ENCODE measurements at regions of chr4 and their contacts with region 1.

Region 1: GRCh38 chr4:7192252-7193029 is at the start of gene SORCS2:
- DNase-seq: no peak
- H3K4me3 ChIP-seq: peak within 1 kb of the TSS; percentile 23 to 67 (median 40)
- H3K27ac ChIP-seq: no peak within 1 kb of the TSS
- H3K4me1 ChIP-seq: peaks cover 18 to 49% (median 22%) of the 10 kb centered on the region in 3 donors
- H3K27me3 ChIP-seq: peaks cover 5 to 97% (median 9%) of the 10 kb centered on the region in 4 donors
- CTCF ChIP-seq: peak in 5 of 6 experiments; percentile 27 to 93 (median 83)
- POLR2A ChIP-seq: no peak
- total RNA-seq, gene SORCS2: 1.1 to 2.5 (median 2.0) TPM

Region 2: DNA sequence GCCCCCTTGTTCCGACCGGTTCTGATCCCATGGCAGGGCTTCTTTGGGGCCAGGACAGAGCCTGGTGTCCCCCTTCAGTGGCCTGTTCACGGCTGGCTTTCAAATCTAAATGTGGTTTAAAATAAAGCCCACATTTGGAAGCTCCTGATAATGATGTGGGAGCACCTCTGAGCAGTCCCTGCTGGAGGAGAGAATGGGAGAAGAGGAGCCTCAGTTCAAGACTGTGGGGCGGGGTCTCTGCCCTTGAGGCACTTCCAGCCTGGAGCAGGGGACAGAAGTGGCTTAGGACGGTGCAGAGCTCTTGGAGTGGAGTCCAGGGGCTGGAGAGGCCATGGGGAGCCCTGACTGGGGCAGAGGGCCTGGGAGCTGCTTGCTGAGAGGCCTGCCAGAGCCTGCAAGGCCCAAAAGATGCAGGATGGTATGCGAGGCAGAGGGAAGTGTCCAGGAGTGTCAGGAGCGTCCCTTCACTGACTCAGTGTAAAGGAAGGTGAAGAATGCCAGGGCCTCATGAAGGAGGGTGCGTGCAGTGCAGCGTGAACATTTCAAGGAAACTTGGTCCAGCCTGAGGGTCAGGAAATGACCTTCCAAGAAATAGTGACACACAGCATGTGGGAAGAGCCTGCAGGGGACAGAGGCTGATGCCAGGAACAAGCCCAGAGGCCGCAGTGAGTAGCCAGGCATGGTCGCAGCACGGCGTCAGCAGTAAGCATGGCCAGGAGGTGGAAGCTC is 170.3 kb before region 1 on chr4:
- intact Hi-C with region 1: no loop called
- DNase-seq: no peak
- H3K4me3 ChIP-seq: no peak overlapping the region
- H3K27ac ChIP-seq: no peak overlapping the region
- H3K4me1 ChIP-seq: no peaks in the 10 kb centered on the region
- H3K27me3 ChIP-seq: no peaks in the 10 kb centered on the region
- CTCF ChIP-seq: no peak
- POLR2A ChIP-seq: no peak

Region 3: DNA sequence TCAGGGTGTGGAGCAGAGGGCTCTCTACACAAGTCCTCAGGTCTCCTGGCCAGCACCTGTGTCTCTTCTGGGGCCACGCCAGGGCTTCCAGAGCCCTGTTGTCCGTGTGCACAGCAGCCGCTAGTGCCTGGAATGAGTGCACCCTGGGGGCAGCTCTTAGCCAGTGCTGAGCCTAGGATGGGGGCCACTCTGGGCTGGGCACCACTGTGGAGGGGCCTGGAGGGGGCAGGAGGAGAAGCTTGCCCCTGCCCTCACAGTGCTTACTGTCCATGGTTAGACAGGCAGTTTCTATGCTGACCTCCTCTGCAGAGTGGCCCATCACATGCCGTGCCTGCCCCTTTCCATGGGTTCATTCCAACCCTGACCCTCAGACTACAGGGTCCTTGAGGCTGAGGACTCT is 81.9 kb before region 1 on chr4:
- intact Hi-C with region 1: no loop called
- DNase-seq: no peak
- H3K4me3 ChIP-seq: no peak overlapping the region
- H3K27ac ChIP-seq: no peak overlapping the region
- H3K4me1 ChIP-seq: no peaks in the 10 kb centered on the region
- H3K27me3 ChIP-seq: no peaks in the 10 kb centered on the region
- CTCF ChIP-seq: no peak
- POLR2A ChIP-seq: no peak

Region 4: GRCh38 chr4:7295911-7296660 is 103.6 kb after region 1 on chr4:
- intact Hi-C with region 1: loop called (anchors 5 kb)
- DNase-seq: no peak
- H3K4me3 ChIP-seq: no peak overlapping the region
- H3K27ac ChIP-seq: no peak overlapping the region
- H3K4me1 ChIP-seq: peaks cover 0 to 17% (median 0%) of the 10 kb centered on the region in 3 donors
- H3K27me3 ChIP-seq: peaks cover 0 to 28% (median 0%) of the 10 kb centered on the region in 4 donors
- CTCF ChIP-seq: peak; percentile 15 to 71 (median 56)
- POLR2A ChIP-seq: no peak

Region 5: GRCh38 chr4:7719354-7720174 is 527.1 kb after region 1 on chr4:
- intact Hi-C with region 1: loop called (anchors 5 kb)
- DNase-seq: no peak
- H3K4me3 ChIP-seq: no peak overlapping the region
- H3K27ac ChIP-seq: no peak overlapping the region
- H3K4me1 ChIP-seq: peaks cover 0 to 5% (median 0%) of the 10 kb centered on the region in 3 donors
- H3K27me3 ChIP-seq: peaks cover 0 to 43% (median 0%) of the 10 kb centered on the region in 4 donors
- CTCF ChIP-seq: peak; percentile 32 to 85 (median 70)
- POLR2A ChIP-seq: no peak

Measured in esophagus squamous epithelium (tissue), 5 donors.